MCF 10A (cell line): ENCODE measurements at regions of chr12 and their contacts with region 1.

Region 1: GRCh38 chr12:2794736-2795289 is at the start of gene FKBP4:
- DNase-seq: peak; percentile 89
- H3K4me3 Mint-ChIP-seq: peak within 1 kb of the TSS; percentile 94
- H3K27ac Mint-ChIP-seq: peak within 1 kb of the TSS; percentile 49
- H3K4me1 Mint-ChIP-seq: peaks cover 11% of the 10 kb centered on the region
- H3K27me3 Mint-ChIP-seq: no peaks in the 10 kb centered on the region
- CTCF ChIP-seq: no peak
- total RNA-seq, gene FKBP4: 79.1 and 94.5 TPM in 2 replicates

Region 2: DNA sequence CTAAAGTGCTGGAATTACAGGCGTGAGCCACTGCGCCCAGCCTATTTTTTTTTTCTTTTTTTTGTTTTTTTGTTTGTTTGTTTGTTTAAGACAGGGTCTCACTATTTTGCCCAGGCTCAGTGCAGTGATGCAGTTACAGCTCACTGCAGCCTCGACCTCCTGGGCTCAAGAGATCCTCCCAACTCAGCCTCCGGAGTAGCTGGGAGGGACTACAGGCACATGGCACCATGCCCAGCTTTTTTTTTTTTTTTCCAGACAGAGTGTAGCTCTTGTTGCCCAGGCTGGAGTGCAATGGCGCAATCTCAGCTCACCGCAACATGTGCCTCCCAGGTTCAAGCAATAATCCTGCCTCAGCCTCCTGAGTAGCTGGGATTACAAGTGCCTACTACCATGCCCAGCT is 11.9 kb after region 1 on chr12:
- CTCF ChIA-PET with region 1: interaction called, 26 read pairs
- POLR2A ChIA-PET with region 1: interaction called, 128 read pairs
- intact Hi-C with region 1: no loop called
- DNase-seq: peak; percentile 72
- H3K4me3 Mint-ChIP-seq: no peak overlapping the region
- H3K27ac Mint-ChIP-seq: no peak overlapping the region
- H3K4me1 Mint-ChIP-seq: no peaks in the 10 kb centered on the region
- H3K27me3 Mint-ChIP-seq: no peaks in the 10 kb centered on the region
- CTCF ChIP-seq: no peak

Region 3: GRCh38 chr12:2812290-2813213 is 17.7 kb after region 1 on chr12 and contains the start of gene ITFG2:
- CTCF ChIA-PET with region 1: interaction called, 26 read pairs
- POLR2A ChIA-PET with region 1: interaction called, 128 read pairs
- intact Hi-C with region 1: loop called (anchors 2 kb)
- DNase-seq: peak; percentile 99
- H3K4me3 Mint-ChIP-seq: peak within 1 kb of the TSS; percentile 100
- H3K27ac Mint-ChIP-seq: peak within 1 kb of the TSS; percentile 98
- H3K4me1 Mint-ChIP-seq: peaks cover 6% of the 10 kb centered on the region
- H3K27me3 Mint-ChIP-seq: no peaks in the 10 kb centered on the region
- CTCF ChIP-seq: no peak
- total RNA-seq, gene ITFG2: 26.5 and 28.1 TPM in 2 replicates